ENCODE measurements at regions of chr22 and their contacts with region 1.

Region 1: GRCh38 chr22:40922484-40923303 is 28.5 kb upstream of the RBX1 start:
- DNase-seq: no peak
- ATAC-seq: peak; percentile 78

Region 2: GRCh38 chr22:41146573-41146972 is 223.9 kb after region 1 on chr22:
- intact Hi-C with region 1: loop called (anchors 10 kb)
- DNase-seq: no peak
- ATAC-seq: no peak

Measured in left ventricle myocardium superior (tissue), 1 donor.